ENCODE measurements at regions of chr16 and their contacts with region 1.

Region 1: GRCh38 chr16:11560701-11561449 is 25.8 kb downstream of the LITAF start:
- DNase-seq: peak; percentile 41 to 92 (median 89)
- ATAC-seq: peak; percentile 92
- H3K4me3 ChIP-seq: peak overlapping the region; percentile 56
- H3K4me3 Mint-ChIP-seq: peak overlapping the region; percentile 79 to 97 (median 84)
- H3K27ac ChIP-seq: peak overlapping the region; percentile 89
- H3K27ac Mint-ChIP-seq: peak overlapping the region; percentile 92 to 99 (median 99)
- H3K4me1 ChIP-seq: peaks cover 70 to 85% of the 10 kb centered on the region in 2 donors
- H3K4me1 Mint-ChIP-seq: peaks cover 43 to 92% (median 78%) of the 10 kb centered on the region in 7 donors
- H3K27me3 ChIP-seq: no peaks in the 10 kb centered on the region
- H3K27me3 Mint-ChIP-seq: peaks cover 0 to 2% (median 0%) of the 10 kb centered on the region in 5 donors

Region 2: GRCh38 chr16:11224096-11224893 is 336.6 kb before region 1 on chr16:
- CTCF ChIA-PET with region 1: no interaction called
- POLR2A ChIA-PET with region 1: no interaction called
- intact Hi-C with region 1: loop called in 1 of 2 experiments (anchors 2 kb)
- DNase-seq: peak; percentile 36 to 67 (median 48)
- ATAC-seq: peak; percentile 68
- H3K4me3 ChIP-seq: peak overlapping the region; percentile 49
- H3K4me3 Mint-ChIP-seq: peak overlapping the region; percentile 78 to 87 (median 80)
- H3K27ac ChIP-seq: peak overlapping the region; percentile 91
- H3K27ac Mint-ChIP-seq: peak overlapping the region; percentile 97 to 99 (median 98)
- H3K4me1 ChIP-seq: peaks cover 30 to 36% of the 10 kb centered on the region in 2 donors
- H3K4me1 Mint-ChIP-seq: peaks cover 37 to 73% (median 52%) of the 10 kb centered on the region in 7 donors
- H3K27me3 ChIP-seq: no peaks in the 10 kb centered on the region
- H3K27me3 Mint-ChIP-seq: no peaks in the 10 kb centered on the region

Region 3: GRCh38 chr16:11572301-11572995 is 11.6 kb after region 1 on chr16:
- CTCF ChIA-PET with region 1: no interaction called
- POLR2A ChIA-PET with region 1: interaction called, 8 read pairs
- intact Hi-C with region 1: loop called (anchors 1 kb)
- DNase-seq: peak in 8 of 9 donors; percentile 34 to 89 (median 84)
- ATAC-seq: peak; percentile 79
- H3K4me3 ChIP-seq: no peak overlapping the region
- H3K4me3 Mint-ChIP-seq: peak overlapping the region; percentile 43 to 81 (median 73)
- H3K27ac ChIP-seq: peak overlapping the region; percentile 72
- H3K27ac Mint-ChIP-seq: peak overlapping the region; percentile 71 to 100 (median 98)
- H3K4me1 ChIP-seq: peaks cover 47 to 70% of the 10 kb centered on the region in 2 donors
- H3K4me1 Mint-ChIP-seq: peaks cover 47 to 94% (median 69%) of the 10 kb centered on the region in 7 donors
- H3K27me3 ChIP-seq: no peaks in the 10 kb centered on the region
- H3K27me3 Mint-ChIP-seq: no peaks in the 10 kb centered on the region

Region 4: DNA sequence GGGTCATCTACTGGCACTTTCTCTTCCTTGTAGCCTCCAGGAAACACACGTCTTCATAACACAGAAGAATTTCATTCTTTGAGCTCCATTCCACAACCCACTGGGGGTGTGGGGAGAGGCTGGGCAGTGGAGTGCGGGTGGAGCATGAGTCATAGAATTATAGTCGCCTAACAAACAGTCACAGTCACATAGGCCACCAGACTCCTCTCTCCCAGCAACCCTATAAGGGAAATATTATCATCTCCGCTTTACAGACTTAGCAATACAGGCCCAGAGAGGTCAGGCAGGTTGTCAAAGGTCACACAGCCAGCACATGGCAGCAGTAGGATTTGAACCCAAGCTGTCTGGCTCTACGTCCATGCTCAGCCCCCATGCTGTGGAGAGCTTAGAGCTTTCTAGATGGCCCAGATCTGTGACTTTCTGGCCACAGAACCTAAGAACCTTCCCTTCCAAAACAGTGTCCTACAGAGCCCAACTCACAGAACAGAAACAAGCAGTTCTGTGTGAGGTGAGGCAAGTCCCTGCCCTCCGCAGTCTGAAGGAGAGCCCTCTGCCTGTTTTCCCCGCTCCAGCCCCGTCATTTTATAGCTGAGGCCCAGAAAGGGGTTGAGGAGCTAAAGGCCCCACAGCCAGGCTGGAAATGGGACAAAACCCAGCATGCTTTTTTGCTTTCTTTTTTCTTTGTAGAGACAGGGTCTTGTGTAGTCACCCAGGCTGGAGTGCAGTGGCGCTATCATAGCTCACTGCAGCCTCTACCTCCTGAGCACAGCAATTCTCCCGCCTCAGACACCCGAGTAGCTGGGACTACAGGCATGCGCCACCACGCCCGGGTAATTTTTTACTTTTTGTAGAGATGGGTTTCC is 36.6 kb after region 1 on chr16:
- CTCF ChIA-PET with region 1: interaction called, 3 read pairs
- POLR2A ChIA-PET with region 1: interaction called, 3 read pairs
- intact Hi-C with region 1: loop called in 1 of 2 experiments (anchors 5 kb)
- DNase-seq: peak in 2 of 9 donors; percentile 24
- ATAC-seq: peak; percentile 85
- H3K4me3 ChIP-seq: no peak overlapping the region
- H3K4me3 Mint-ChIP-seq: peak overlapping the region in 4 of 10 donors; percentile 9 to 54 (median 14)
- H3K27ac ChIP-seq: peak overlapping the region; percentile 34
- H3K27ac Mint-ChIP-seq: peak overlapping the region; percentile 40 to 88 (median 81)
- H3K4me1 ChIP-seq: peaks cover 0 to 13% of the 10 kb centered on the region in 2 donors
- H3K4me1 Mint-ChIP-seq: peaks cover 8 to 26% (median 16%) of the 10 kb centered on the region in 7 donors
- H3K27me3 ChIP-seq: no peaks in the 10 kb centered on the region
- H3K27me3 Mint-ChIP-seq: peaks cover 0 to 5% (median 0%) of the 10 kb centered on the region in 5 donors

Region 5: GRCh38 chr16:11783319-11784037 is 222.6 kb after region 1 on chr16:
- CTCF ChIA-PET with region 1: no interaction called
- POLR2A ChIA-PET with region 1: no interaction called
- intact Hi-C with region 1: no loop called
- DNase-seq: peak; percentile 31 to 89 (median 82)
- ATAC-seq: peak; percentile 90
- H3K4me3 ChIP-seq: peak overlapping the region; percentile 52
- H3K4me3 Mint-ChIP-seq: peak overlapping the region; percentile 79 to 92 (median 85)
- H3K27ac ChIP-seq: peak overlapping the region; percentile 96
- H3K27ac Mint-ChIP-seq: peak overlapping the region; percentile 95 to 99 (median 99)
- H3K4me1 ChIP-seq: peaks cover 33 to 49% of the 10 kb centered on the region in 2 donors
- H3K4me1 Mint-ChIP-seq: peaks cover 41 to 68% (median 62%) of the 10 kb centered on the region in 7 donors
- H3K27me3 ChIP-seq: no peaks in the 10 kb centered on the region
- H3K27me3 Mint-ChIP-seq: no peaks in the 10 kb centered on the region

Region 6: GRCh38 chr16:11915644-11916523 is 355.0 kb after region 1 on chr16 and contains the start of gene GSPT1:
- CTCF ChIA-PET with region 1: no interaction called
- POLR2A ChIA-PET with region 1: no interaction called
- intact Hi-C with region 1: loop called in 1 of 2 experiments (anchors 10 kb)
- DNase-seq: peak; percentile 96 to 100 (median 99)
- ATAC-seq: peak; percentile 94
- H3K4me3 ChIP-seq: peak within 1 kb of the TSS; percentile 74
- H3K4me3 Mint-ChIP-seq: peak within 1 kb of the TSS; percentile 85 to 99 (median 96)
- H3K27ac ChIP-seq: peak within 1 kb of the TSS; percentile 87
- H3K27ac Mint-ChIP-seq: peak within 1 kb of the TSS; percentile 87 to 98 (median 95)
- H3K4me1 ChIP-seq: peaks cover 13 to 24% of the 10 kb centered on the region in 2 donors
- H3K4me1 Mint-ChIP-seq: peaks cover 23 to 37% (median 34%) of the 10 kb centered on the region in 7 donors
- H3K27me3 ChIP-seq: no peaks in the 10 kb centered on the region
- H3K27me3 Mint-ChIP-seq: peaks cover 0 to 10% (median 0%) of the 10 kb centered on the region in 5 donors
- total RNA-seq, gene GSPT1: 92.8 to 148 (median 101) TPM

Measured in naive thymus-derived CD4-positive, alpha-beta T cell (primary cell).